ENCODE measurements at regions of chr19 and their contacts with region 1.

Region 1: DNA sequence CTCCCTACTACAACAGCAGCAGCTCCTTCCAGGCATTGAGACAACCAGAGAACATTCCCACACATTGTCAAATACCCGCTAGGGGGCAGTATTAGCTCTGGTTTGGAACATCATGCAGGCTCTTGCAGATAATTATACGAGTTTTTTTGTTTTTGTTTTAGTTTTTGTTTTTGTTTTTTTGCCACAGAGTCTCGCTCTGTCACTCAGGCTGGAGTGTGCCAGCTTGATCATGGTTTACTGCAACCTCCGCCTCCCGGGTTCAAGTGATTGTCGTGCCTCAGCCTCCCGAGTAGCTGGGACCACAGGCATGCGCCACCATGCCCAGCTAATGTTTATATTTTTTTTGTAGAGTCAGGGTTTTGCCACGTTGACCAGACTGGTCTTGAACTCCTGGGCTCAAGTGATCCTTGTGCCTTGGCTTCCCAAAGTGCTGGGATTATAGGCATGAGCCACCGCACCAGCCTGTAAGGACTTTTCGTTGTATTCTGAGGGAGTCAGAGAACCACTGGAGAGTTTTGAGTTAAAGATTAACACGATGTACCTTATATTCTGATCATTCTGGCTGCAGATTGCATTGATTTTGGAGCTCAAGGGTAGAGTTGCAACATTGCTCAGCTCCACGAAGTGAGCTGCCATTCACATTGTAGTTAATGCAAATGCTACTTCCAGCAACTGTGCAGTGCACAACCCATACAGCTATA is 41.7 kb upstream of the CEACAM20 start:
- DNase-seq: peak; percentile 86
- H3K4me3 ChIP-seq: no peak overlapping the region
- H3K27ac ChIP-seq: no peak overlapping the region
- H3K4me1 ChIP-seq: no peaks in the 10 kb centered on the region
- H3K27me3 ChIP-seq: no peaks in the 10 kb centered on the region
- CTCF ChIP-seq: peak; percentile 80

Region 2: DNA sequence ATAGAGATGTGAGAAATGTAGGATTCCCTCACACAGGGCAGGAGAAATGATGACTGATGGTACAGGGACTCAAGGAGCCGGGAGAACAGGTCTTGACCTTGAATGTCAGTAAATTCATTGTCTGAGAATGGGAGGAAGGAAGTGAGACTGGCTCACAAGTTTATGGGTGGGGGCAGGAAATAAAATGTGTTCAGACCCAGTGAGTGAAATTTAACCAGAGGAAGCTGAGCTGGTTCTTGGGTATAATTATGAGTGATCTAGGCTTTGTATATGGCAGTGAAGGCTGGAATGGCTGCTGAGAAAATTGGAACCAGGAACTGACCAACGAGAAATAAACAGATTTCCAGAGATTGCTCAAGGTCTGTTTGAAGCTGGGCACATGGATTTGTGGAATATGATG is 35.9 kb after region 1 on chr19:
- intact Hi-C with region 1: no loop called
- DNase-seq: peak; percentile 64
- H3K4me3 ChIP-seq: no peak overlapping the region
- H3K27ac ChIP-seq: peak overlapping the region; percentile 40
- H3K4me1 ChIP-seq: peaks cover 11% of the 10 kb centered on the region
- H3K27me3 ChIP-seq: no peaks in the 10 kb centered on the region
- CTCF ChIP-seq: no peak

Region 3: GRCh38 chr19:44657211-44657921 is 86.2 kb after region 1 on chr19:
- intact Hi-C with region 1: loop called (anchors 5 kb)
- DNase-seq: peak; percentile 68
- H3K4me3 ChIP-seq: no peak overlapping the region
- H3K27ac ChIP-seq: no peak overlapping the region
- H3K4me1 ChIP-seq: no peaks in the 10 kb centered on the region
- H3K27me3 ChIP-seq: no peaks in the 10 kb centered on the region
- CTCF ChIP-seq: peak; percentile 90